Heart right ventricle (tissue), 16 donors: ENCODE measurements at regions of chr2 and their contacts with region 1.

Region 1: GRCh38 chr2:12716282-12717190 is at the start of gene TRIB2:
- DNase-seq: peak; percentile 92 to 94
- ATAC-seq: peak; percentile 76 to 94 (median 82)
- H3K4me3 ChIP-seq: peak within 1 kb of the TSS; percentile 73 to 97 (median 84)
- H3K27ac ChIP-seq: peak within 1 kb of the TSS; percentile 97 to 99 (median 99)
- H3K4me1 ChIP-seq: peaks cover 0 to 43% (median 36%) of the 10 kb centered on the region in 9 donors
- H3K27me3 ChIP-seq: peaks cover 0 to 16% (median 0%) of the 10 kb centered on the region in 7 donors
- CTCF ChIP-seq: peak in 4 of 9 donors; percentile 11 to 43 (median 26)
- total RNA-seq, gene TRIB2: 26.7 to 46.6 (median 36.5) TPM

Region 2: GRCh38 chr2:11863513-11864328 is 852.8 kb before region 1 on chr2:
- intact Hi-C with region 1: loop called in 9 of 10 experiments (anchors 2 to 10 kb)
- DNase-seq: peak; percentile 84 to 89
- ATAC-seq: peak; percentile 91 to 96 (median 94)
- H3K4me3 ChIP-seq: peak overlapping the region in 5 of 10 donors; percentile 11 to 31 (median 16)
- H3K27ac ChIP-seq: peak overlapping the region in 9 of 10 donors; percentile 45 to 77 (median 49)
- H3K4me1 ChIP-seq: peaks cover 0 to 23% (median 13%) of the 10 kb centered on the region in 9 donors
- H3K27me3 ChIP-seq: no peaks in the 10 kb centered on the region
- CTCF ChIP-seq: peak; percentile 91 to 99 (median 97)

Region 3: GRCh38 chr2:12176623-12177454 is 539.7 kb before region 1 on chr2:
- intact Hi-C with region 1: loop called in 2 of 10 experiments (anchors 10 kb)
- DNase-seq: peak; percentile 32 to 71
- ATAC-seq: peak; percentile 63 to 95 (median 91)
- H3K4me3 ChIP-seq: no peak overlapping the region
- H3K27ac ChIP-seq: peak overlapping the region in 5 of 10 donors; percentile 10 to 73 (median 48)
- H3K4me1 ChIP-seq: peaks cover 3 to 32% (median 25%) of the 10 kb centered on the region in 9 donors
- H3K27me3 ChIP-seq: no peaks in the 10 kb centered on the region
- CTCF ChIP-seq: no peak

Region 4: DNA sequence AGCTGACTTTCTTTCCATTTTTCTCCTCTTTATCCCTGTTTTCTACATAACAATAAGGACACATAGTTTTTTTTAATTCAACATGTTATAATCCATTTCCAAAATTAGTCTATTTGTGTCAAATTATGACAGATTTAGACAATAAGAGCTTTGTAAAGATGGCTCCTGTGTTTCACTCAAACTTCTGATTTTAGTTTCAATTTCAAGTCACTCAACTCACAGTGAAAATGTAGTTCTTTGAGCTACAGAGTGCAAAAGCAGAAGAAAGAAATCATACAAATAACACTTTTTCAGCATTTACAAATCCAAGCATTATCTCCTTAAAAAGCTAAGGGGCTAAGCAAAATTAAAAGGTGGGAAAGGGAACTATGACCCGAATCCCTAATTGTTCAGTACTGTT is 340.5 kb before region 1 on chr2:
- intact Hi-C with region 1: no loop called
- DNase-seq: no peak
- ATAC-seq: no peak
- H3K4me3 ChIP-seq: no peak overlapping the region
- H3K27ac ChIP-seq: no peak overlapping the region
- H3K4me1 ChIP-seq: no peaks in the 10 kb centered on the region
- H3K27me3 ChIP-seq: no peaks in the 10 kb centered on the region
- CTCF ChIP-seq: no peak

Region 5: GRCh38 chr2:12456293-12457151 is 260.0 kb before region 1 on chr2:
- intact Hi-C with region 1: loop called in 2 of 10 experiments (anchors 10 kb)
- DNase-seq: peak; percentile 79 to 85
- ATAC-seq: peak; percentile 80 to 97 (median 94)
- H3K4me3 ChIP-seq: peak overlapping the region in 7 of 10 donors; percentile 21 to 35 (median 26)
- H3K27ac ChIP-seq: peak overlapping the region; percentile 9 to 84 (median 60)
- H3K4me1 ChIP-seq: peaks cover 0 to 46% (median 19%) of the 10 kb centered on the region in 9 donors
- H3K27me3 ChIP-seq: no peaks in the 10 kb centered on the region
- CTCF ChIP-seq: no peak

Region 6: DNA sequence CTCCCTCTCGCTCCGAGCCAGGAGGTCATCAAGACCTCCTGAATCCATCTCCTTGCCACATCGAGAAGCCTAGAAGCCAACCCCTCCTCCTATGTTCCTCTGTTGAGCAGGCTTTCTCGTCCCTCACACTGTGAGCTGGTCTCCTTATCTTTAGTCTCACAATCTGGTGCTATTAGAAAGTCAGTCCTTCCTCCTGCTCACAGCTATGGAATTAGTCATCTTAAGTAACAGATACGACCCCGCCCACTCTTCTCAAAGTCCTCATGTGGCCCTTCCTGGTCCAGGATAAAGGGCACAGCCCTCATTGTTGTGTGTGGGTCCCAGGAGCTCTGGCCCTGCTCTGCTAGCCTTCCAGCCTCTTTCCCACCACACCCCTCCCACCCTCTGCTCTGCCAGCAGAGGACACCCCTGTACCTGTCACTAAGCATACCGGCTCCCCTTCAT is 41.2 kb before region 1 on chr2:
- intact Hi-C with region 1: loop called in 1 of 10 experiments (anchors 5 kb)
- DNase-seq: no peak
- ATAC-seq: peak; percentile 43 to 88 (median 70)
- H3K4me3 ChIP-seq: no peak overlapping the region
- H3K27ac ChIP-seq: peak overlapping the region in 6 of 10 donors; percentile 8 to 71 (median 50)
- H3K4me1 ChIP-seq: peaks cover 0 to 12% (median 3%) of the 10 kb centered on the region in 9 donors
- H3K27me3 ChIP-seq: no peaks in the 10 kb centered on the region
- CTCF ChIP-seq: no peak

Region 7: GRCh38 chr2:12819103-12819475 is 102.6 kb after region 1 on chr2:
- intact Hi-C with region 1: loop called in 6 of 10 experiments (anchors 2 to 10 kb)
- DNase-seq: peak in 1 of 2 donors; percentile 93
- ATAC-seq: peak; percentile 95 to 97 (median 96)
- H3K4me3 ChIP-seq: peak overlapping the region in 1 of 10 donors; percentile 11
- H3K27ac ChIP-seq: peak overlapping the region; percentile 70 to 92 (median 87)
- H3K4me1 ChIP-seq: peaks cover 16 to 70% (median 44%) of the 10 kb centered on the region in 9 donors
- H3K27me3 ChIP-seq: no peaks in the 10 kb centered on the region
- CTCF ChIP-seq: no peak

Region 8: DNA sequence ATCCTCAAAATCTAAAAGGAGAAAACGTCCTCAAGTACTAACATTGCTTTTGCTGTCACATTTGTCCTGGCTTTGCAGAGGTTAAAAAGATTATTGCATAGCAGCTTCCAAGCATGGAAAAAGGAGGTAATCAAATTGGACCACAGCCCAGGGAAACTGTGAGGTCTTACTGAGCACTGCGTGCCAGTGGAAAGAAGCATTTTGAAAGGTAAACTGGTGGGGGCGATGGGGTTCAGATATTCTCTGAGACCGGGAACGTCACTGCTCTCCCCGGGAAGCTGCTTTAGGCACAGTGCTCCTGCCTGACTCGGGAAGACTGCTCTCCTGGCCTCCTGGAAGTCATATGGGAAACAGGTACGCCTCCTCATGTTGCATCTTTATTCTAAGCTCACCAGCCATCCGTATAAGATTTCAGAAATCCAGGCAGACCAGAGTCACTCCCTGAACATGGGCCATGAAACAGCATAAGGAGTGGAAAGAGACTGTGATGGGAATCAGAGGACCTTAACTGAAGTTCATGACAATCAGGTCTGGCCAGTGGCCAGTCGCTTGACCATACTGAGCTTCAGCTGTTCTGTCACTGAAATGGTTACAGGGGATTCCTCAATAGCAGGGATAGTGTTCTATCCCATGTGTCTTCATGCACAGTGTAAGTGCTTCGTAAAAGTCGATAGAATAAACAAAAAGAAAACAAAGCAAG is 284.3 kb after region 1 on chr2:
- intact Hi-C with region 1: loop called (anchors 2 to 10 kb)
- DNase-seq: peak in 1 of 2 donors; percentile 83
- ATAC-seq: peak; percentile 36 to 90 (median 82)
- H3K4me3 ChIP-seq: peak overlapping the region in 9 of 10 donors; percentile 2 to 41 (median 30)
- H3K27ac ChIP-seq: peak overlapping the region in 9 of 10 donors; percentile 13 to 75 (median 63)
- H3K4me1 ChIP-seq: peaks cover 0 to 51% (median 30%) of the 10 kb centered on the region in 9 donors
- H3K27me3 ChIP-seq: no peaks in the 10 kb centered on the region
- CTCF ChIP-seq: no peak